Heart right ventricle (tissue), 16 donors: ENCODE measurements at regions of chr7 and their contacts with region 1.

Region 1: DNA sequence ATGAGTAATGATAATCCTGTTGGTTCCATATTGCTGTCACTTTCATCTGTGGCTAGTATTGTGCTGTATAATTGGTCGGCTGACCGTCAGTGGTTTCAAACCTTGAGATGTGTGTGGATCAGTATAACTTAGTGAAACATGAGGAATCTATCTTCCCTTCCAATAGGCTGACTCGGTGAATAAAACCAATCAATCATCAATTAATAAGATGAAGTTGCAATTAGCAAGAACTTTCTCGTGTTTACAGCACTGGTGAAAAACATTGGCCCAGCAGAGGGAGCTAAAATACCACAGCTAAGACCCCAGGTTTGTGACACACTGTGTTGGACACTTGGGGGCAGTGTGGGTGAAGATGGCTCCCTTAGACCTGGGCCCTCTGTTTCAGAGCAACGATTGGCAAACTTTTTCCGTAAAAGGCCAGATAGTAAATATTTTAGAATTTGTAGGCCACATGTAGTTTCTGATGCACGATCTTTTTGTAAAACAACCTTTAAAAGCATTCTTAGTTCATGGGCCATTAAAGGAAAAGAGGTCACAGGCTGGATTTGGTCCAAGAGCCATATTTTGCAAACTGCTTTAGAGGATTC is 47.8 kb downstream of the STRA8 start:
- DNase-seq: peak; percentile 45 to 87
- ATAC-seq: peak; percentile 86 to 97 (median 95)
- H3K4me3 ChIP-seq: peak overlapping the region in 2 of 10 donors; percentile 20 to 24
- H3K27ac ChIP-seq: no peak overlapping the region
- H3K4me1 ChIP-seq: peaks cover 0 to 10% (median 0%) of the 10 kb centered on the region in 9 donors
- H3K27me3 ChIP-seq: peaks cover 0 to 18% (median 5%) of the 10 kb centered on the region in 7 donors
- CTCF ChIP-seq: peak; percentile 81 to 100 (median 96)

Region 2: DNA sequence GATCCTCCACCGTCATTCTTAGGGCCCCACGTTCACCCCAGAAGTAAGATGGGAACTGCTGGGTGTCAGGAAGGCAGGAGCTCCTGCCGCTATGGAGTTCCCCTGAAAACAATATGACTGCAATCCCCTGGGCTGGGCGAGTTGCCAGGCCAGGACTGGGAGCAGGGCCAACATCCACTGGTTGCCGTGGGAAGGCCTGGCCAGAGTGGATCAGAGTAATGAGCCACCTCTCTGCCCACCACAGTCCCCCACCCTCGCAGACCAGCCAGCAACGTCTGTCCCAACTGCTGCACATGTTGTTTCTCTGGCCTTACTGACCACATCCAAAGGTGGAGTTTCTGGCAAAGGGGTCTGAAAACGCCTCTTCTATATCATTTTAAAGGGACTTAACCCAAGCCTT is 38.8 kb after region 1 on chr7:
- intact Hi-C with region 1: loop called in 1 of 10 experiments (anchors 5 kb)
- DNase-seq: peak; percentile 81 to 85
- ATAC-seq: peak; percentile 66 to 90 (median 86)
- H3K4me3 ChIP-seq: no peak overlapping the region
- H3K27ac ChIP-seq: no peak overlapping the region
- H3K4me1 ChIP-seq: peaks cover 0 to 20% (median 8%) of the 10 kb centered on the region in 9 donors
- H3K27me3 ChIP-seq: no peaks in the 10 kb centered on the region
- CTCF ChIP-seq: no peak

Region 3: DNA sequence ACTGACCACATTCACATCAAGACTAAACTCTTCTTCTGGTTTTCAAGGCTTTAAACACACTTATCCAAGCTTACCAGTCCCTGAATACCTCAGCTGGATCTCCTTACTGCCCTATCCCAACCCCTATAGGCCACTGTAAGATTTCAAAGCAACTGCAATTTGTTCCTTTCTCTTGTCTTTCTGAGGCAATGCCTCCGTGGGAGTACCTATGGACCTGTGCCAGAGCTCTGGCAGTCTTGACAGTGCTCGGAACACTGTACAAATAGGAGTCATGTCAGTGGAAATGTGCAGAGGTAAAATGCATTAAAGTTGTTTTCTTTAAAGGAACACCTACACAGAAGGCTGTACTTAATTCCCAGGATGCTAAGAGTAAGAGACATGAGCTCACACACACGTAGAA is 103.8 kb after region 1 on chr7:
- intact Hi-C with region 1: loop called in 1 of 10 experiments (anchors 10 kb)
- DNase-seq: peak in 1 of 2 donors; percentile 14
- ATAC-seq: peak in 1 of 8 donors; percentile 39
- H3K4me3 ChIP-seq: no peak overlapping the region
- H3K27ac ChIP-seq: no peak overlapping the region
- H3K4me1 ChIP-seq: peaks cover 0 to 35% (median 10%) of the 10 kb centered on the region in 9 donors
- H3K27me3 ChIP-seq: no peaks in the 10 kb centered on the region
- CTCF ChIP-seq: no peak

Region 4: GRCh38 chr7:135509903-135510602 is 228.6 kb after region 1 on chr7 and contains the start of gene CNOT4:
- intact Hi-C with region 1: loop called in 3 of 10 experiments (anchors 2 to 5 kb)
- DNase-seq: peak; percentile 96
- ATAC-seq: peak; percentile 98 to 100 (median 99)
- H3K4me3 ChIP-seq: peak within 1 kb of the TSS; percentile 66 to 86 (median 80)
- H3K27ac ChIP-seq: peak within 1 kb of the TSS; percentile 64 to 96 (median 93)
- H3K4me1 ChIP-seq: peaks cover 0 to 38% (median 27%) of the 10 kb centered on the region in 9 donors
- H3K27me3 ChIP-seq: no peaks in the 10 kb centered on the region
- CTCF ChIP-seq: no peak
- total RNA-seq, gene CNOT4: 24.4 to 31.7 (median 27.8) TPM

Region 5: DNA sequence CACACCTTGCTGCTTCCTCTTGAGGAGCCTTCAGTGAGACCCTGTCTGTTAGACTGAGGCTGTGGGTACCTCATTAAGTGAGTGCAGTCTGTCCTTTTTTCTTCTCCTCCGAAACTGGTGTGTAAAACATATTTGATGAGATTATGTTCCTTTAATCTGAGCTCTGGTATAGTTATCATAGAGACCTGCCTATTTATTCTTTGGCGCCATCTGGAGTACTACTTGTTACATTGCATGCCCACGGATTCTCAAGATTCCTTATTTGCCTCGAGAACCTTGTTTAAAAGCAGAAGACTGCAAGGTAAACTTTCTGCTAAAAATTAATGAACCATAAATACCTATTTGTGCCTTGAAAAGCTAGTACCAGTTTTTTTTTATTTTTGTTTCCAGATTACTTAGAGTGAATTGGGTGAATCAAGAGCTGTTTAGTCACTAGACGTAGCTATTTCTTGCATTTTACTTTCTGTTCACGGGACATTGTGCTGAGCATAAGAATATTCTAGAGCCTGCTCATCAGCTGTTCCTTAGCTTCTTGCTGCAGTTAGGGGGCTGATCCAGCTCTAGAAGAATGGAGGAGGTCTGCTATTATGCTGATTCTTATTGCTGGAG is 363.9 kb after region 1 on chr7:
- intact Hi-C with region 1: loop called in 9 of 10 experiments (anchors 2 to 10 kb)
- DNase-seq: peak in 1 of 2 donors; percentile 28
- ATAC-seq: peak in 6 of 8 donors; percentile 42 to 70 (median 46)
- H3K4me3 ChIP-seq: no peak overlapping the region
- H3K27ac ChIP-seq: no peak overlapping the region
- H3K4me1 ChIP-seq: no peaks in the 10 kb centered on the region
- H3K27me3 ChIP-seq: no peaks in the 10 kb centered on the region
- CTCF ChIP-seq: peak; percentile 43 to 76 (median 72)